Common myeloid progenitor, CD34-positive (primary cell): ENCODE measurements at regions of chr3 and their contacts with region 1.

Region 1: DNA sequence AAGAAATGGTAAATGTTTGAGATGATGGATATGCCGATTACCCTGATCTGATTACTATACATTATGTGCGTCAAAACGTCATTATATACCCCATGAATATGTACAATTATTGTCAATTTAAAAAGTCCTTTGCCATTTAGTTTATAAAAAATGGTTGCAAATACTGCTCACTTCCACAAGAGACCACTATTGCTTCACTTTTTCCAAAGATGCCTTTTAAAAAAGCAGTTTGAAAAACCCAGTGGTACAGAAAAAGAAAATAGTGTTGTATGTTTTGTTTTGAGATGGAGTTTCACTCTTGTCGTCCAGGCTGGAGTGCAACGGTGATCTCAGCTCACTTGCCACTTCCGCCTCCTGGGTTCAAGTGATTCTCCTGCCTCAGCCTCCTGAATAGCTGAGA is 39.3 kb downstream of the EDEM1 start:
- DNase-seq: peak; percentile 42 to 72 (median 67)
- H3K4me3 ChIP-seq: no peak overlapping the region
- H3K27ac ChIP-seq: no peak overlapping the region
- H3K4me1 ChIP-seq: peaks cover 0 to 4% (median 1%) of the 10 kb centered on the region in 4 experiments
- H3K27me3 ChIP-seq: no peaks in the 10 kb centered on the region

Region 2: GRCh38 chr3:5151586-5151985 is 75.2 kb before region 1 on chr3:
- CTCF ChIA-PET with region 1: no interaction called
- POLR2A ChIA-PET with region 1: no interaction called
- DNase-seq: no peak
- H3K4me3 ChIP-seq: no peak overlapping the region
- H3K27ac ChIP-seq: no peak overlapping the region
- H3K4me1 ChIP-seq: no peaks in the 10 kb centered on the region
- H3K27me3 ChIP-seq: no peaks in the 10 kb centered on the region

Region 3: GRCh38 chr3:5448816-5449215 is 222.0 kb after region 1 on chr3:
- CTCF ChIA-PET with region 1: no interaction called
- POLR2A ChIA-PET with region 1: no interaction called
- DNase-seq: no peak
- H3K4me3 ChIP-seq: no peak overlapping the region
- H3K27ac ChIP-seq: no peak overlapping the region
- H3K4me1 ChIP-seq: no peaks in the 10 kb centered on the region
- H3K27me3 ChIP-seq: no peaks in the 10 kb centered on the region

Region 4: GRCh38 chr3:6799264-6799915 is 1572.6 kb after region 1 on chr3:
- CTCF ChIA-PET with region 1: interaction called, 13 read pairs
- POLR2A ChIA-PET with region 1: interaction called, 4 read pairs
- DNase-seq: peak; percentile 44 to 68 (median 66)
- H3K4me3 ChIP-seq: no peak overlapping the region
- H3K27ac ChIP-seq: no peak overlapping the region
- H3K4me1 ChIP-seq: no peaks in the 10 kb centered on the region
- H3K27me3 ChIP-seq: no peaks in the 10 kb centered on the region